ENCODE measurements at regions of chr5 and their contacts with region 1.

Region 1: DNA sequence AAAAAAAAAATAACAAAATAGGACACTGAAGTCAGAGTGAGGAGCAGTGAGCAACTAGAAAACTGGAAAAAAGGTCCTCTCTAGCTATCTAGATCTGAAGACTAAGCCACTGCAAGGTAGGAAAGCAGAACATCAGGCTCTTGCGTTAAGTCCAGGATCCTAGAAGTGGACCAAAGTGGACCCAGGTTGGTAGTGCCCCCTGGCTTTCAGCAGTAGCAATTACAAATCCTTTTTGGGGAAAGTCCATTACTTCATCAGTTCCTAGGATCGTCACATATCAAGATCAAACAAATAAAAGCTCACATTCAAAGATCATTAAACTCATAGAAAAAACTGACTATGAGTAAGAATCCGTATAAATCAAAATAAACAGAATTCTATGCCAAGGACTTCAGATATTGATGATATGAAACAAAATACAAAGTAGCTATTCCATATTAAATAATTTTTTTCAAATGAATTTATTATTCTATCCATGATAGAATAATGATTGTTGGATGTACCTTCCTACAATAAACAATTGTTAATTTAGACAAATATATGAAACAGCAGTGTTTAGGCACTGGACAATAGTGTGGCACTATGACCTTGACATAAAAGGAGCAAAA is 6.5 kb upstream of the RICTOR start:
- DNase-seq: no peak
- H3K4me3 ChIP-seq: no peak overlapping the region
- H3K27ac ChIP-seq: no peak overlapping the region
- H3K4me1 ChIP-seq: peaks cover 20% of the 10 kb centered on the region
- H3K27me3 ChIP-seq: no peaks in the 10 kb centered on the region
- CTCF ChIP-seq: peak; percentile 88

Region 2: GRCh38 chr5:38509185-38509584 is 571.5 kb before region 1 on chr5:
- intact Hi-C with region 1: no loop called
- DNase-seq: no peak
- H3K4me3 ChIP-seq: no peak overlapping the region
- H3K27ac ChIP-seq: no peak overlapping the region
- H3K4me1 ChIP-seq: no peaks in the 10 kb centered on the region
- H3K27me3 ChIP-seq: no peaks in the 10 kb centered on the region
- CTCF ChIP-seq: no peak

Region 3: GRCh38 chr5:38994324-38994927 is 86.3 kb before region 1 on chr5:
- intact Hi-C with region 1: loop called (anchors 5 kb)
- DNase-seq: no peak
- H3K4me3 ChIP-seq: no peak overlapping the region
- H3K27ac ChIP-seq: no peak overlapping the region
- H3K4me1 ChIP-seq: peaks cover 30% of the 10 kb centered on the region
- H3K27me3 ChIP-seq: no peaks in the 10 kb centered on the region
- CTCF ChIP-seq: peak; percentile 68

Region 4: GRCh38 chr5:39014544-39014943 is 66.2 kb before region 1 on chr5:
- intact Hi-C with region 1: loop called (anchors 5 kb)
- DNase-seq: no peak
- H3K4me3 ChIP-seq: no peak overlapping the region
- H3K27ac ChIP-seq: peak overlapping the region; percentile 83
- H3K4me1 ChIP-seq: peaks cover 62% of the 10 kb centered on the region
- H3K27me3 ChIP-seq: no peaks in the 10 kb centered on the region
- CTCF ChIP-seq: no peak

Region 5: GRCh38 chr5:39132128-39132447 is 51.4 kb after region 1 on chr5:
- intact Hi-C with region 1: no loop called
- DNase-seq: no peak
- H3K4me3 ChIP-seq: no peak overlapping the region
- H3K27ac ChIP-seq: no peak overlapping the region
- H3K4me1 ChIP-seq: no peaks in the 10 kb centered on the region
- H3K27me3 ChIP-seq: no peaks in the 10 kb centered on the region
- CTCF ChIP-seq: no peak